ENCODE measurements at regions of chr18 and their contacts with region 1.

Region 1: GRCh38 chr18:44887227-44887631 is 206.5 kb downstream of the SETBP1 start:
- DNase-seq: peak; percentile 11
- H3K4me3 Mint-ChIP-seq: peak overlapping the region; percentile 57
- H3K27ac Mint-ChIP-seq: peak overlapping the region; percentile 99
- H3K4me1 Mint-ChIP-seq: peaks cover 35% of the 10 kb centered on the region
- H3K27me3 Mint-ChIP-seq: no peaks in the 10 kb centered on the region

Region 2: DNA sequence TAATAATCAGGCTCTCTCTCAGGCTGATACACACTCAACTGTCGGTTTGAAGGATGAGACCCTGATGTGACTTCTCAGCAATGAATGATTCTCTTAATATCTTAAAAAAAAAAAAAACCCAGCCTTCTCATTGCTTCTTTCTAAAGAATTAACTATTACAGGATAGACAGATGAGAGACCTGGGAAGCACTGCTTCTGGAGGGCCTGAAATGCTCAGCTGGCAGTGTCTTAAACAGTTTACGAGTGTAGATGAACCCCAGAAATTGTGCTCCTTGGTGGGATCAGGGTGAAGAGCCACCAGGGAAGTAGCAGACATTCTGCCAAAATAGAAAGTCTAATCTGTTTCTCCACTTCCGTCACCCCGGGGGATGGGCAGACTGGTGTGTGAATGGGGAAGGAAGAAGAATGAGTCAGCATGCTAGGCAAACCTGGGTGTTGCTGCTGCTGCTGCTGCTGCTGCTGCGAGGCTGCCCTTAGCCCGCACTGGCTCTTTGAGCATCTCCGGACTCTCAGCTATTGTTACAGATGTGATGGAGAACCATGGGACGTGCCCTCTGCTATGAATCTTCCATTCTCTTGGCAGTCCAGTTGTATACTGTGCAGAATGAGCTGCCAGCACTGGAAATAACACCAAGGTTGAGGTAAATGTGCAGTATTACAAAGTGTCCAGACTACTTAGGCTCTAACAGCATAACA is 48.1 kb before region 1 on chr18:
- intact Hi-C with region 1: loop called (anchors 1 kb)
- DNase-seq: peak; percentile 62
- H3K4me3 Mint-ChIP-seq: no peak overlapping the region
- H3K27ac Mint-ChIP-seq: peak overlapping the region; percentile 5
- H3K4me1 Mint-ChIP-seq: peaks cover 39% of the 10 kb centered on the region
- H3K27me3 Mint-ChIP-seq: no peaks in the 10 kb centered on the region

Region 3: GRCh38 chr18:44859751-44860439 is 27.3 kb before region 1 on chr18:
- intact Hi-C with region 1: no loop called
- DNase-seq: no peak
- H3K4me3 Mint-ChIP-seq: no peak overlapping the region
- H3K27ac Mint-ChIP-seq: no peak overlapping the region
- H3K4me1 Mint-ChIP-seq: peaks cover 9% of the 10 kb centered on the region
- H3K27me3 Mint-ChIP-seq: peaks cover 12% of the 10 kb centered on the region

Region 4: DNA sequence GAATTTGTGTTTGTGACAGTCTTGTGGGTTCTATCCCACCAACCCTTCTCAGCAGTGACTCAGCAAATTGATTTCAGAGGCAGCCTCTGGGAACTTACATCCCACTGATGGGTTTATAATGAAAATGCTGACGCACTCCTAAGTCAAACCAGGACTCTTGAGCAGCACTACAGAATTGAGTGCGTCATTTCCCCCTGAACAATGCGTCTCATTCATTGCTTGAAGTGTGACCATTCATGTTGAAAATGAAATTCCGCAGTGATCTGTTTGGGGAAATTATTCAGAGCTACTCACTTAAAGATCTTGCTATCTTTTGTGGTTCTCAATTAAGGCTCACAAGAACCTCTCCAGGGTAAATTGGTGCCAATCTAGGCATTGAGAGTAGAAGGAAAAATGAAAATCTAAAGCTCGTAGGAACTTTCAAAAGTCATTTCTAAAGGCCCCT is 310.3 kb after region 1 on chr18:
- intact Hi-C with region 1: loop called (anchors 1 kb)
- DNase-seq: no peak
- H3K4me3 Mint-ChIP-seq: no peak overlapping the region
- H3K27ac Mint-ChIP-seq: no peak overlapping the region
- H3K4me1 Mint-ChIP-seq: peaks cover 1% of the 10 kb centered on the region
- H3K27me3 Mint-ChIP-seq: peaks cover 11% of the 10 kb centered on the region

Measured in activated T-helper 2 cell treated with anti-CD3 and anti-CD28 coated beads, Interferon-gamma antibody, Interleukin-2, Interleukin-4, amounts not matched to agents 10 μg/mL and 5 μg/mL and 100 μg/mL, durations not matched to agents 14 hours and 24 hours and 36 hours (primary cell).